ENCODE measurements at regions of chr10 and their contacts with region 1.

Region 1: DNA sequence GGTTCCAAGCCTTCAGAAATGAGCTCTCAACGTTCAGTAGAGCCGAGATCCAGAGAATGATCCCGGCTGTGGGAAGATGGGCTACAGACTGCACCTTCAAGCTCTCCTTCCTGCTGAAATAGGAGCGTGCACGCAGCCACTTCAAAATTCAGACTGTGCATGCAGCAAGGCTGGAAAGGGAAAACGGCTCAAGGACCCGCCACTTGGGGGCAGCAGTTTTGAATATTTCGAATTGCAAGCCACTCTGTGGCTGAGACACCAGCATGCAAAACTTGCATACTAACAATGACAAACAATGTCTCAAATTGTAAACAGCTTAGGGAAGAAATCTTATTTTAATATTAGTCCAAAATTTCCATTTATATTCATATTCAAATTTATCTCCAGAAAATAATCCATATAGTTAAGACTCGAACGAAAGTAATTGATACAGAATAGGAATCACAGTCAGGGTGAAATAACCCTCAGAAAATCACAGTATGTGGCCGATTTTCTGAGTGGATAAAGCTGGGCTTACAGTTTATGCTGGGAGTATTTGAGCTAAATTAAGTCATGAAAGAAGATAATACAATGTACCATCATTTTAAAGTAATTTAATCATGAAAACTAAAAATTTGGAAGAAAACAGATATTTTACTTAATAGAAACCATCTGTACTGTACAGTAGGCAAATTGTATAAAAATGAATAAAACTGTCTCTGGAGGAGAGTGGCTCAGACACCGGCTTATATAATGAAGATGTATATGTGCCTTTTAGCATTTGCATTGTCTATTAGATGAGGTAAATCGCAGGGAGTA is 137.9 kb upstream of the MKI67 start:
- DNase-seq: peak; percentile 61

Region 2: GRCh38 chr10:128530301-128530700 is 266.2 kb after region 1 on chr10:
- in situ Hi-C with region 1: loop called (anchors 25 kb)
- DNase-seq: peak; percentile 24